Left lung (tissue), 14 donors: ENCODE measurements at regions of chr4 and their contacts with region 1.

Region 1: GRCh38 chr4:1693129-1693896 is 9.2 kb upstream of the FAM53A start:
- DNase-seq: peak; percentile 53 to 91 (median 80)
- ATAC-seq: peak; percentile 95
- H3K4me3 ChIP-seq: no peak overlapping the region
- H3K27ac ChIP-seq: no peak overlapping the region
- H3K4me1 ChIP-seq: peaks cover 0 to 12% of the 10 kb centered on the region in 2 donors
- H3K27me3 ChIP-seq: no peaks in the 10 kb centered on the region
- CTCF ChIP-seq: peak; percentile 89 to 98

Region 2: GRCh38 chr4:1614854-1615634 is 78.3 kb before region 1 on chr4:
- intact Hi-C with region 1: no loop called
- DNase-seq: peak in 1 of 4 donors; percentile 53
- ATAC-seq: no peak
- H3K4me3 ChIP-seq: no peak overlapping the region
- H3K27ac ChIP-seq: no peak overlapping the region
- H3K4me1 ChIP-seq: no peaks in the 10 kb centered on the region
- H3K27me3 ChIP-seq: no peaks in the 10 kb centered on the region
- CTCF ChIP-seq: no peak

Region 3: GRCh38 chr4:1726146-1726934 is 33.0 kb after region 1 on chr4:
- intact Hi-C with region 1: loop called in 1 of 2 experiments (anchors 5 kb)
- DNase-seq: peak; percentile 75 to 95 (median 90)
- ATAC-seq: peak; percentile 81
- H3K4me3 ChIP-seq: peak overlapping the region in 1 of 2 donors; percentile 31
- H3K27ac ChIP-seq: peak overlapping the region; percentile 22 to 89
- H3K4me1 ChIP-seq: peaks cover 12 to 90% of the 10 kb centered on the region in 2 donors
- H3K27me3 ChIP-seq: no peaks in the 10 kb centered on the region
- CTCF ChIP-seq: peak; percentile 99 to 100